ENCODE measurements at regions of chr11 and their contacts with region 1.

Region 1: GRCh38 chr11:2377511-2378443 is 667 bp downstream of the CD81 start:
- DNase-seq: no peak
- ATAC-seq: peak; percentile 53
- H3K4me3 ChIP-seq: peak overlapping the region; percentile 97
- H3K27ac ChIP-seq: peak overlapping the region; percentile 74
- H3K4me1 ChIP-seq: peaks cover 30% of the 10 kb centered on the region
- H3K27me3 ChIP-seq: no peaks in the 10 kb centered on the region
- CTCF ChIP-seq: no peak
- EP300 ChIP-seq: no peak
- POLR2A ChIP-seq: peak; percentile 64
- RAD21 ChIP-seq: no peak

Region 2: DNA sequence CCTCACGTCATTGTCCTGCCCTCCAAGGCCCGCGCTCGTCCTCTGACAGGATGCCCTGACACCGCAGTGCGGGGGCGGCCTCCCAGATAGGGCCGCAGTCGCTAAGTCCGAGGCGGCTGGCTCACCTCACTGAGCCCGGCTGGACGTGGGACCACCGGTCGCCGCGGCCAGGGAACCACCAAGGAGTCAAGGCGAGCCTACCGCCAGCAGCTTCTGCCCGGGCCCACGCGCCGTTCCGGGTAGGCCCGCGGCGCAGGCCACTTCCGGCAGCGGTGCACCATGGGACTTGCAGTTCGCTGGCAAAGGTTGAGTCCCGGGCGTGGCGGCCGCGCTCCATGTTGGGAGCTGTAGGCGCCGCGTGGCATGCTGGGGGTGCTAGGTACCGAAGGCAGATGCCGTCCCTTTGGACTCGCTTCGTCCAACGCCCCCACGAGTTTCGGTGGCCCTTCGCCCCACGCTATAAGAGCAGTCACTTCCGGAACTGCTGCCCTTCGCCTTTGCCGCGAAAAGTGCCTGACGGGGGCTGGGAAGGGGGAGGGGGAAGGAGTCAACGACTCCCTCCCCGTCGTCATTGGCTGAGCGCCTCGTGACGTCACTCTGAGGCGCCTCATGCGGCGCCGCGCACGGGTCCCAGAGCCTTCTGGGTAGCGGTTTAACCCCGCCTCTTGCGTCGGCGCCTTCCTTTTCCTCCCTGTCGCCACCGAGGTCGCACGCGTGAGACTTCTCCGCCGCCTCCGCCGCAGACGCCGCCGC is 1568.3 kb before region 1 on chr11 and contains the start of gene RPLP2:
- CTCF ChIA-PET with region 1: no interaction called
- POLR2A ChIA-PET with region 1: no interaction called
- RAD21 ChIA-PET with region 1: no interaction called
- SMC1A ChIA-PET with region 1: no interaction called
- in situ Hi-C with region 1: loop called (anchors 25 kb)
- intact Hi-C with region 1: no loop called
- DNase-seq: peak; percentile 92
- ATAC-seq: peak; percentile 86
- H3K4me3 ChIP-seq: peak within 1 kb of the TSS; percentile 98
- H3K27ac ChIP-seq: peak within 1 kb of the TSS; percentile 99
- H3K4me1 ChIP-seq: peaks cover 8% of the 10 kb centered on the region
- H3K27me3 ChIP-seq: no peaks in the 10 kb centered on the region
- CTCF ChIP-seq: no peak
- EP300 ChIP-seq: peak; percentile 7 to 21; a peak in 2 of 4 replicates
- POLR2A ChIP-seq: peak; percentile 89
- RAD21 ChIP-seq: no peak
- polyA plus RNA-seq, gene RPLP2: 1,446 to 3,075 TPM

Region 3: GRCh38 chr11:2317354-2318050 is 60.3 kb before region 1 on chr11:
- CTCF ChIA-PET with region 1: no interaction called
- POLR2A ChIA-PET with region 1: no interaction called
- RAD21 ChIA-PET with region 1: no interaction called
- SMC1A ChIA-PET with region 1: no interaction called
- in situ Hi-C with region 1: no loop called
- intact Hi-C with region 1: no loop called
- DNase-seq: no peak
- ATAC-seq: no peak
- H3K4me3 ChIP-seq: no peak overlapping the region
- H3K27ac ChIP-seq: no peak overlapping the region
- H3K4me1 ChIP-seq: no peaks in the 10 kb centered on the region
- H3K27me3 ChIP-seq: no peaks in the 10 kb centered on the region
- CTCF ChIP-seq: no peak
- EP300 ChIP-seq: no peak
- POLR2A ChIP-seq: no peak
- RAD21 ChIP-seq: no peak